WTC11 (cell line): ENCODE measurements at regions of chr1 and their contacts with region 1.

Region 1: GRCh38 chr1:46223472-46223943 is 20.4 kb downstream of the LURAP1 start:
- DNase-seq: peak; percentile 66
- ATAC-seq: peak; percentile 84
- H3K4me3 Mint-ChIP-seq: no peak overlapping the region
- H3K27ac Mint-ChIP-seq: peak overlapping the region; percentile 84
- H3K4me1 Mint-ChIP-seq: peaks cover 33% of the 10 kb centered on the region
- H3K27me3 Mint-ChIP-seq: no peaks in the 10 kb centered on the region
- CTCF ChIP-seq: peak; percentile 83

Region 2: GRCh38 chr1:46036894-46037839 is 186.3 kb before region 1 on chr1:
- CTCF ChIA-PET with region 1: interaction called, 60 read pairs
- POLR2A ChIA-PET with region 1: no interaction called
- DNase-seq: peak; percentile 92
- ATAC-seq: peak; percentile 76
- H3K4me3 Mint-ChIP-seq: no peak overlapping the region
- H3K27ac Mint-ChIP-seq: no peak overlapping the region
- H3K4me1 Mint-ChIP-seq: no peaks in the 10 kb centered on the region
- H3K27me3 Mint-ChIP-seq: no peaks in the 10 kb centered on the region
- CTCF ChIP-seq: peak; percentile 98

Region 3: DNA sequence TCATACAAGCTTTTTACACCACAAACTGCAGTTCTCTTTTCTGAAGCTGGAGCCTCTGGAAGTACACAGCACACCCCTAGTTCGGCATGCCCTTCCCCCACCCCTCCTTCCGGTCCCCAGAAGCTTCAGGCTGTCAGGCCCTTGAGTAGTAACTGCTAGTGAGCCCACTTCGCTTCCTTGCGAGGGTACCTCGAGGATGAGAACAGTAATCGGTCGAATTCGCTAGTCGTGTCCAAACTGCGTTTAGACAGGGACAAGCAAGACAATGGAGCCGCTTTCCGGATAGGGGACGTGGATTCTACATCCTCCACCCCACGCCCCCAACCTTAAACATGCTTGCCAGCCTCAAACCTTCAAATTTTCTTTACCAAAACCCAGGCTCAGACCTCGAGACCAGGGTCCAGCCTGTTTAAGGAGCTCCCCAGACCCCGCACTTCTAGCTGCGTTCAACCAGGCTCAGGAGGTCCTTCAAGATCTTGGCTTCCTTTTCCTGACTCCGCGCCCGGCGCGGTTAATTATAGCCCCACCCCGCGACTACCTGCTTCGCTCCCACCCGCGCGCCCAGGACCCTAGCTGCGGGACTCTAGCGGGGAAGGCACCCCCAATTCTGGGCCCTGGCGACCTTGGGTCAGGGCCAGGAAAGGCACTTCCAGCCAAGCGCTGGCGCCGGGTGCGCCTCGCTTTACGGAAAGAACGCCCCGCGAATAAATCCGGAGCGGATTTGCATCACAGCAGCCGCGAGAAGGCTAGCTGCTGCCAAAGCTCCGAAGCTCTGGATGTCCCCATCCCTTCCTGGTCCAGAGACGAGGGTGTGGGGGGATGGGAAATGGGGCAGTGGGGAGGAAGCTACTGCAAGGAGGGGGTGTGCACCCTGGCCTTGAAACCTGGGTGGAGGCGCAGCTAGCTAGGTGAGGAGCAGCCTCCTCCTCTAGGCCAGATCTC is 56.7 kb before region 1 on chr1:
- CTCF ChIA-PET with region 1: interaction called, 11 read pairs
- POLR2A ChIA-PET with region 1: no interaction called
- DNase-seq: peak; percentile 52
- ATAC-seq: peak; percentile 50
- H3K4me3 Mint-ChIP-seq: peak overlapping the region; percentile 57
- H3K27ac Mint-ChIP-seq: no peak overlapping the region
- H3K4me1 Mint-ChIP-seq: peaks cover 24% of the 10 kb centered on the region
- H3K27me3 Mint-ChIP-seq: peaks cover 49% of the 10 kb centered on the region
- CTCF ChIP-seq: no peak

Region 4: GRCh38 chr1:46197964-46198811 is 25.3 kb before region 1 on chr1 and contains the start of gene POMGNT1:
- CTCF ChIA-PET with region 1: interaction called, 67 read pairs
- POLR2A ChIA-PET with region 1: interaction called, 5 read pairs
- DNase-seq: peak; percentile 64
- ATAC-seq: peak; percentile 76
- H3K4me3 Mint-ChIP-seq: peak within 1 kb of the TSS; percentile 75
- H3K27ac Mint-ChIP-seq: no peak within 1 kb of the TSS
- H3K4me1 Mint-ChIP-seq: peaks cover 15% of the 10 kb centered on the region
- H3K27me3 Mint-ChIP-seq: no peaks in the 10 kb centered on the region; the same call in 1 of the 2 replicates
- CTCF ChIP-seq: no peak
- total RNA-seq, gene POMGNT1: 42.5 to 43.2 TPM (median 43.2 TPM) in 3 replicates

Region 5: GRCh38 chr1:46236882-46237281 is 13.4 kb after region 1 on chr1:
- CTCF ChIA-PET with region 1: interaction called, 47 read pairs
- POLR2A ChIA-PET with region 1: interaction called, 3 read pairs
- DNase-seq: no peak
- ATAC-seq: no peak
- H3K4me3 Mint-ChIP-seq: no peak overlapping the region
- H3K27ac Mint-ChIP-seq: no peak overlapping the region
- H3K4me1 Mint-ChIP-seq: no peaks in the 10 kb centered on the region
- H3K27me3 Mint-ChIP-seq: peaks cover 15% of the 10 kb centered on the region; the same call in 1 of the 2 replicates
- CTCF ChIP-seq: no peak